ENCODE measurements at regions of chr6 and their contacts with region 1.

Region 1: DNA sequence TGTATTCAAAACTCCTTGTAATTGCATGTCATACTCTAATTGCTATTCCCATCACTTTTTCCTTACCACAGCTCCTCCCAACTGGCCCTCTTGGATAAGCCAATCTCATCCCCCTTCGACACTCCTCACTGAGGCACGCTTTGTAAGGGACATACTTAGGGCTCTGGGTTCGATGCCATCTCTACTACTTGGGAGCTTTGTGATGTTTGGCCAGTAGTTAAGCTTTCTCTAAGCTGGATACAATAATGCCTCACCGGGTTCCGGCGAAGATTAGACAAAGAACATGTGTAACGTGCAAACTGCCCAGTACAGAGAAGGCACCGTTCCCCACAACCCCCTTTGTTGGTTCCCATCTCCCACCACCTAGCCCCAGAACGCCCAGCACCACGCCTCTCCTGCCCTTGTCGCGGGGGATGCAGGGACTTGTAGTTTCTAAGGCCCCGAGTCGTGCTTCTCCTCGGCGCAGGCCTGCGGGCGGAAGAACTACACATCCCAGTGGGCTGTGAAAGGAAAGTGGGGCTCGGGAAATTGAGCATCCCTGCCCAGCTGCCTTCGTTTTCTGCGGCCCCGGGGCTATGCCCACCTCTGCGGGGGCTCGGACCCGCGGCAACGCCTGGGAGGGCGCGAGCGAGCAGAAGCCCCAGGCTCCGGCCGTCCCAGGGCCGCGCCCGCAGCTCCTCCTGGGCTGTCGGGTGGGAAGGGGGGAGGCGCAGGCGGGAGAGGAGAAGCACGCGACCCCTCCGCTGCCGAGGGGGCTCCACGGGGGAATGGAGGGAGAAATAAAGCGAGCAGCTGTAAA is 1.1 kb upstream of the ZDHHC14 start:
- DNase-seq: peak; percentile 79 to 81 (median 80)
- H3K4me3 ChIP-seq: peak overlapping the region; percentile 85 to 97 (median 93)
- H3K4me3 Mint-ChIP-seq: peak overlapping the region; percentile 81 to 89
- H3K27ac ChIP-seq: peak overlapping the region; percentile 58 to 86
- H3K27ac Mint-ChIP-seq: peak overlapping the region in 6 of 7 donors; percentile 33 to 87 (median 82)
- H3K4me1 ChIP-seq: peaks cover 19 to 20% of the 10 kb centered on the region in 2 donors
- H3K4me1 Mint-ChIP-seq: peaks cover 30% of the 10 kb centered on the region
- H3K27me3 ChIP-seq: no peaks in the 10 kb centered on the region
- H3K27me3 Mint-ChIP-seq: peaks cover 3 to 12% (median 5%) of the 10 kb centered on the region in 3 donors
- CTCF ChIP-seq: no peak

Region 2: DNA sequence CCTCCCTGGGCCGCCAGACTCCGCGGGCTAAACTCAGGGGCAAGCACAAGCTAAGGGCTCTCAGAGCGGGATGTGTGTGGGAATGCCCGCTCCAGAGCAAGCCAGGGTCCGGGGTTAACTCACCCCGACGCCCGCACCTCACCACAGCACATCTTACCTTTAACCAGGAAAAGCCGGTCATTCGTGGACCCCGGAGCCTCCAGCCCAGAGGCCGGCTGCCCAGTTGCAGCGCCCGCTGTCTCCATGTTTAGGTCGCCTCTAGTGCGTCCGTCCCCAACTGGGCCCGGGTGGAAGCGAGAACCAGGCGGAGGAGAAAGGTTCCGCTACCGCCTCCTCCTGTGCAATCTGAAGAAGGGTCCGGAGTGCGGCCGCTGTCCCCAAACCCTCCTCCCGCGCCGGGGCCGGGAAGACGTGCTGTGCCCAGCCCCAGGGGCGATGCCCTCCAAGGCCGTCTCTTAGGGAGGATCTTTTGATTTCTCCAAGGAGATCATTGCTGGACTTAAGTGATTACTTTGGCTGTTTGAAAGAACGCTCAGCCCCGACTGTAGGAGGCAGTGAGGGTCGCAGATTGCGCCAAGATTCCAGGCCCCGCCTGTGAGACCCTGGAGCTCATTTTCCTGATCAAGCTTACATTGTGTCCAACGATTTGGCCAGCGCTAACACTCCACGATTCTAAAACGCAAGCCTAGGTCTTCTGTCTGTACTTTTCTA is 56.4 kb before region 1 on chr6 and contains the start of gene TMEM242:
- intact Hi-C with region 1: loop called in 1 of 2 experiments (anchors 5 kb)
- DNase-seq: peak; percentile 87 to 92 (median 87)
- H3K4me3 ChIP-seq: peak within 1 kb of the TSS; percentile 63 to 87 (median 74)
- H3K4me3 Mint-ChIP-seq: peak within 1 kb of the TSS; percentile 98 to 99
- H3K27ac ChIP-seq: peak within 1 kb of the TSS; percentile 87 to 90
- H3K27ac Mint-ChIP-seq: peak within 1 kb of the TSS; percentile 92 to 98 (median 97)
- H3K4me1 ChIP-seq: peaks cover 14 to 18% of the 10 kb centered on the region in 2 donors
- H3K4me1 Mint-ChIP-seq: peaks cover 14% of the 10 kb centered on the region
- H3K27me3 ChIP-seq: peaks cover 2 to 10% of the 10 kb centered on the region in 2 donors
- H3K27me3 Mint-ChIP-seq: peaks cover 5 to 18% (median 8%) of the 10 kb centered on the region in 3 donors
- CTCF ChIP-seq: peak; percentile 17
- polyA plus RNA-seq, gene TMEM242: 5.6 to 9.8 (median 8.3) TPM